ENCODE measurements at regions of chr5 and their contacts with region 1.

Region 1: GRCh38 chr5:154405078-154405792 is 40.6 kb upstream of the SAP30L start:
- DNase-seq: peak; percentile 83 to 93 (median 93)
- ATAC-seq: peak; percentile 95 to 97
- H3K4me3 ChIP-seq: peak overlapping the region; percentile 22
- H3K27ac ChIP-seq: no peak overlapping the region
- H3K4me1 ChIP-seq: no peaks in the 10 kb centered on the region
- H3K27me3 ChIP-seq: no peaks in the 10 kb centered on the region

Region 2: DNA sequence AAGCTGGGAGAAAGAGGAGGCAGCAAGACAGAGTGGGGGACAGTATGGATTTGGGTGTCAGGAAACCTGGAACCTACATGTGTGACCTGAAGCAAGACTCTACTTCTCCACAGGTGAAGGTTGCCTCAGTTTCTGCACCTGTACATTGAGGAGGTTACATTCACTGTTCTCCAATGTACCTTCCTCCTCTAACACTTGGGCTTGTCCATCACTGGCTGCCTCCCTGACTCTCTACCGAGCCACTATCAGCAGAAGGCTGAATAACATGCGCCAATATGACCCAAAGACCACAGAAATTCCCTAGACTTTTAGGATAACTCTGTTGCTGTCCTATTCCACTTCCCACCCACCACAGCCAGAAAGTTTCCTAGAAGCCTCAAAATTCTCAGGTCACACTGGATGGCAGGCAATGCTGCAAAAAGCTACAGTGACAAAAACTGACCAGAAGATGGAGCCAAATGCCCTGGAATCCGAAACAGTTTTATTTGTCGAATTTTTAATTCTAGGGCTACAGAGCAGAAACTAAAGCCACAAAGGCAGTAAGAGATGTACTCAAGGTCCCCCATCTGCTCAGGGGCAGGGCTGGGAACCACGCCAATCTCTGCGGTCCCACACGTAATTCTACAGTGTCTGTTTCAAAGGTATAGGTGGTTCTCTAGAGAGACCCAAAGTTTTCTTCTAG is 431.0 kb before region 1 on chr5:
- intact Hi-C with region 1: loop called in 2 of 4 experiments (anchors 5 to 10 kb)
- DNase-seq: peak in 1 of 3 donors; percentile 47
- ATAC-seq: peak; percentile 10 to 49
- H3K4me3 ChIP-seq: no peak overlapping the region
- H3K27ac ChIP-seq: no peak overlapping the region
- H3K4me1 ChIP-seq: no peaks in the 10 kb centered on the region
- H3K27me3 ChIP-seq: no peaks in the 10 kb centered on the region

Region 3: DNA sequence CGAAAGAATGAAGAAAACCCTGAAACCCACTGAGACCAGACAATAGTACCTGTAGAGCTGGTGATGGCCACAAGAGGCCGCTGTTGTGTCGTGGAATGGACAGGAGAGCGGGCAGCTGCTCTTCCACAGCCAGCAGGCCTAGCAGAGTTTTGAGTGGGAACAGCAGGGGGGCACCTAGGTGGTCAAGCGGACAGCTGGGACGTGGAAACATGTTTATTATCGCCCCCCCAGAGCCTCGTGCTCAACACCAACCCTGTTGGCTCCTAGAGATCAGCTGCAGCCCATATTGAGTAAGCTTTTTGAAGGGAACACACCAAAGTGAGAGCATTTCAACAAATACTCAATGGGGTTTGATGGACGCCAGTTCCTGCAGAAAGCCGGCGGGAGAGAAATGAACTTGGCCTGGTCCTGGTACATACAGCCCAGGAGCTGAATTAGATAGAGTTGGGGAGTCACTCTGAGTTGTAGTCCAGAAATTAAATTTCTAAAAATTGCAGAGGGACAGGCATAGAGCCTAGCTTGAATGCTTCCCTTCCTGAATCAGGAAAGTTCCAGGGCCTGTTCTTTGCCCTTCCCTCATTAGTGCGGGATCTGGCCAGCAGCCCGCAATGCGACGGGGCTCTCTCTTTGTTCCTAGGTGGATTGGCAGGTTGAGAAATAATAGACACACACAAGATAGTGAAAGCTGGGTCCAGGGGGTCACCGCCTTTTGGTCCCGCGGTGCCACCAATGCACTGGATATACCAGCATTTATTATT is 332.6 kb before region 1 on chr5:
- intact Hi-C with region 1: loop called (anchors 5 to 10 kb)
- DNase-seq: peak; percentile 80 to 93 (median 92)
- ATAC-seq: peak; percentile 91 to 93
- H3K4me3 ChIP-seq: no peak overlapping the region
- H3K27ac ChIP-seq: no peak overlapping the region
- H3K4me1 ChIP-seq: no peaks in the 10 kb centered on the region
- H3K27me3 ChIP-seq: no peaks in the 10 kb centered on the region

Region 4: DNA sequence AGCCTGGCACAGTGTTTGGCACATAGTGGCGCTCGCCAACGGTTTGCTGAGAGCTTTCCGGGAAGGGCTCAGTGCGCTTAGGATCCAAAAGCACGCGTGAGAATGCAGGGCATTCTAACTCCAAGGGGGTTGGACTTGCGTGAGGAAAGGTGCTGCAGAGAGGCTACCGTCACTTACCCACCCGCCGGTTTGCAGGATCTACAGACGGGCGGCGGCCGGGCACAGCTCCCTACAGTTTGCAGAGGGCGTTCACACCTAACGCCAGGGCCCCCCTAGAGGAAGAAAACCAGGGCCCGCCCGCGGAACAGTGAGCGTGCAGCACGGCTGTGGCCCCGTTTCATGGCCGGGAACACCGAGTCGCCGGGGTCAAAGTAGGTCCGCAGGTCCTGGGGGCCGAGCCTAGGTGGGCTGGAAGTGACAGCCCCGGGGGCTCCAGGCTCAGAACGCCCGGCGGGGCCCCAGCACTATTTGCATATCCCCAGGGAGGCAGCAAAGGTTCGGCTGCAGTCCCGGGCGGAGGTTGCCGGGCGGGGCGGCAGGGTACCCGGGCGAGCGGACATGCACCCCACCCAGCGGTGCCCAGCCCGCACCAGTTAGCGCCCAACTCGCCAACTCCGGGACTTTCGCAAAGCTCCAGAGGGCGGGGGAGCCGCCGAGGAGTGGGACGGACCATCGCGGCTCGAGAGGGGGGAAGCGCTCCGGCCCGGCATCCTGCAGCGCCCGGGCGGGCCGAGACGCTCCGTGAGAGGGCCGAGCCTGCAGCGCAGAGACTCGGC is 215.2 kb before region 1 on chr5:
- intact Hi-C with region 1: loop called (anchors 5 to 10 kb)
- DNase-seq: peak; percentile 90 to 95 (median 94)
- ATAC-seq: peak; percentile 94 to 95
- H3K4me3 ChIP-seq: peak overlapping the region; percentile 87
- H3K27ac ChIP-seq: peak overlapping the region; percentile 38
- H3K4me1 ChIP-seq: peaks cover 9% of the 10 kb centered on the region
- H3K27me3 ChIP-seq: no peaks in the 10 kb centered on the region